ENCODE measurements at regions of chr3 and their contacts with region 1.

Region 1: DNA sequence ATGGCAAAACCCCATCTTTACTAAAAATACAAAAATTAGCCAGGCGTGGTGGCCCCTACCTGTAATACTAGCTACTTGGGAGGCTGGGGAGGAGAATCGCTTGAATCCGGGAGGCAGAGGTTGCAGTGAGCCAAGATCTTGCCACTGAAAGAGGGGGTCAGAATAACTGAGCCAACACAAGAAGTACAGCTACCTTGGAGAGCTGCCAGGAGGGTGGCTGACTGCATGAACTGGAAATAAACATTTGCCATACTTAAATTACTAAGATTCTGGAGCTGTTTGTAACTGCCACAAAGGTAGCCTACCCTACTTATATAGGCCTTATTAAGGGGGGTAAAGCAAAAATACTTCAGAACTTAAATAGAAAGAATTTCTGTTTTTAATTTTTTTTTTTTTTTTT is 15.4 kb upstream of the PIK3CB start:
- DNase-seq: no peak
- H3K4me3 ChIP-seq: no peak overlapping the region
- H3K27ac ChIP-seq: no peak overlapping the region
- H3K4me1 ChIP-seq: no peaks in the 10 kb centered on the region
- H3K27me3 ChIP-seq: no peaks in the 10 kb centered on the region
- CTCF ChIP-seq: no peak

Region 2: DNA sequence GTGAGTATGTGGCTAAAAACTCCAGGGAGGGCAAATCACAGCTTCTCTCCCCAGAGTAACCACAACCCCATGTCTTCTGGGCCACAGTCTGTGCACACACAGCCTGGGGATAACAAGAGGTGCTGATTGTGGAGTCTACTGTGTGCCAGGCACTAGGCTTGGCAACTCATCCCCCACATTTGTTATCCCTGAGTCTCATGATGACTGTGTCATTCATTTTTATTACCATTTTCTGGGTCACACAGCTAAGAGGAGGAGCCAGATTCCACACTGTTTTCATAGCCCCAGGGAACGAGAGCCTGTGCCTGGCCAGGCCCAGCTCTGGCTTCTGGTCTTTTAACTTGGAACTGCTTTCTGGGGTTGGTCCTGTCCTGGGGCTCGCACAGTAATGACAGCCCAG is 381.3 kb before region 1 on chr3:
- CTCF ChIA-PET with region 1: no interaction called
- dilution Hi-C with region 1: no loop called
- in situ Hi-C with region 1: no loop called
- intact Hi-C with region 1: no loop called
- DNase-seq: peak; percentile 76
- H3K4me3 ChIP-seq: no peak overlapping the region
- H3K27ac ChIP-seq: no peak overlapping the region
- H3K4me1 ChIP-seq: no peaks in the 10 kb centered on the region
- H3K27me3 ChIP-seq: no peaks in the 10 kb centered on the region
- CTCF ChIP-seq: no peak

Region 3: GRCh38 chr3:138862924-138863775 is 13.0 kb after region 1 on chr3:
- CTCF ChIA-PET with region 1: interaction called, 12 read pairs
- dilution Hi-C with region 1: no loop called
- in situ Hi-C with region 1: no loop called
- intact Hi-C with region 1: no loop called
- DNase-seq: peak; percentile 96
- H3K4me3 ChIP-seq: peak overlapping the region in 2 of 3 experiments; percentile 7 to 20
- H3K27ac ChIP-seq: peak overlapping the region; percentile 100
- H3K4me1 ChIP-seq: peaks cover 24% of the 10 kb centered on the region
- H3K27me3 ChIP-seq: no peaks in the 10 kb centered on the region
- CTCF ChIP-seq: no peak

Measured in mammary epithelial cell (primary cell).